ENCODE measurements at regions of chr14 and their contacts with region 1.

Region 1: GRCh38 chr14:75742867-75743266 is 81.8 kb downstream of the TTLL5 start:
- DNase-seq: no peak
- ATAC-seq: no peak
- H3K4me3 Mint-ChIP-seq: no peak overlapping the region
- H3K27ac Mint-ChIP-seq: no peak overlapping the region
- H3K4me1 Mint-ChIP-seq: no peaks in the 10 kb centered on the region
- H3K27me3 Mint-ChIP-seq: no peaks in the 10 kb centered on the region

Region 2: GRCh38 chr14:74389980-74390379 is 1352.9 kb before region 1 on chr14:
- CTCF ChIA-PET with region 1: no interaction called
- POLR2A ChIA-PET with region 1: no interaction called
- intact Hi-C with region 1: loop called in 1 of 2 experiments (anchors 5 kb)
- DNase-seq: no peak
- ATAC-seq: no peak
- H3K4me3 Mint-ChIP-seq: no peak overlapping the region
- H3K27ac Mint-ChIP-seq: no peak overlapping the region
- H3K4me1 Mint-ChIP-seq: no peaks in the 10 kb centered on the region
- H3K27me3 Mint-ChIP-seq: peaks cover 8% of the 10 kb centered on the region

Region 3: DNA sequence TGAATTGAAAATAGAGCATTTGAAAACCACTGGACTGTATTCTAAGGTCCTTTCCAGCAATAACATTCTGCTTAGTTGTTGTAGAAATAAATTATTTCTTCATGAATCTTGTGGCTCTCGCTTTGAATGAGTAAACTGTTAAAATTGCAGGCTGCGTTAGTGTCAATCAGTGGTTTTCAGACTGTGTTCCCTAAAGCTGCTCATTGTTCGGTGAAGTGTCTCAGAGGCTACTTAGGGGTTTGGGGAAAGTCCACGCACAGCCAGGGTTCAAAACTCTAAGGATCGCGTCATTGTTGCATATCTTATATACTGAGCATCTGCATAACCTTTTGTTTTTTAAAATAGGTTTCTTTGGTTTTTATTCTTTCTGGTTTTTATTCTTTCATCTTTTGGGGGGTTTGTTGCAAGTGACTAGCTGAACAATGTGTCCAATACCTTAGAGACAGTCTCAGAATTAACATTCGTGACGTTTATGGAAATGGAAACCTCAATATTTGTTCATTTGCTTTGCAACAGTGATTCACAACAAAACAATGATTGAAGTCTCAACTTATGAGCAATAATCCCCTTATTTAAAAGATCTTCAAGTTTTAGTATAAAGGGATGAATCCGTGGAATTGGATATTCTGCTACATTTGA is 26.3 kb after region 1 on chr14:
- CTCF ChIA-PET with region 1: no interaction called
- POLR2A ChIA-PET with region 1: no interaction called
- intact Hi-C with region 1: no loop called
- DNase-seq: peak; percentile 4
- ATAC-seq: peak; percentile 23
- H3K4me3 Mint-ChIP-seq: no peak overlapping the region
- H3K27ac Mint-ChIP-seq: no peak overlapping the region
- H3K4me1 Mint-ChIP-seq: no peaks in the 10 kb centered on the region
- H3K27me3 Mint-ChIP-seq: no peaks in the 10 kb centered on the region

Measured in activated CD4-positive, alpha-beta T cell treated with anti-CD3 and anti-CD28 coated beads for 36 hours (primary cell).